ENCODE measurements at regions of chr1 and their contacts with region 1.

Region 1: DNA sequence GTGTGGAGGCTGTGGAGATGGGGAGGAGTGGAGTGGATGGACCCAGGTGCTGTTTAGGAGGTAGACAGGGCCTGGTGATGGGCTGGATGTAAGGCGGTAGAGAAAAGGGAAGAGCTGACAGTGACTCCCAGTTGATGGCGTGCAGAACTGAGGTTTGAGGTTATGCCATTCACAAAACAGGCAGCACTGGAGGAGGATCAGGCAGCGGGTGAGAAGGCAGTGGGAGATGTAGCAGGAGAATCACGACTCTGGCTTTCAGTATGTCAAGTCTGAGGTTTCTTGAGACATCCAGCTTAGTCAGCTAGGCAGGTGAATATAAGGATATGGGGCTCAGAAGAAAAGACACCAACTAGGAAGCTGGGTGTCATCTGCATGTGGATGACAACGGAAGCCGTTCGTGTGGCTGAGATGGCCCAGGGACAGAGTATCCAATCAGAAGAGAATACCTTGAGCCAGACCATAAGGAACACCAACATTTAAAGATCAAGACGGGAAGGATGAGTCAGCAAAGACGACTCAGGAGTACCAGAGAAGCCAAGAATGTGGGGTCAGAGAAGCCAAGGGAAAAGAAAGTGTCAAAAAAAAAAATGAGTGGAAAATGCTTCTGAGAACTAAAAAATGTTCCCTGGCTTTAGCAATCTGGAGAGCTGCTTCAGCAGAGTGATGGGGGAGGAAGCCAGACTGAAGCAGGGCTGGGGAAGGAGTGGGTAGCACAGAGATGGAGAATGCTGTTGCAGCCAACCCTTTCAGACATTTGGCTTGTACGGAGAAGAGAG is 15.2 kb downstream of the LRRN2 start:
- DNase-seq: no peak
- ATAC-seq: no peak
- H3K4me3 Mint-ChIP-seq: no peak overlapping the region
- H3K27ac Mint-ChIP-seq: no peak overlapping the region
- H3K4me1 Mint-ChIP-seq: no peaks in the 10 kb centered on the region
- H3K27me3 Mint-ChIP-seq: no peaks in the 10 kb centered on the region
- CTCF ChIP-seq: no peak

Region 2: GRCh38 chr1:204685236-204686006 is 15.1 kb after region 1 on chr1 and contains the start of gene LRRN2:
- CTCF ChIA-PET with region 1: no interaction called
- POLR2A ChIA-PET with region 1: no interaction called
- intact Hi-C with region 1: loop called (anchors 1 kb)
- DNase-seq: no peak
- ATAC-seq: no peak
- H3K4me3 Mint-ChIP-seq: peak within 1 kb of the TSS; percentile 67
- H3K27ac Mint-ChIP-seq: no peak within 1 kb of the TSS
- H3K4me1 Mint-ChIP-seq: peaks cover 13% of the 10 kb centered on the region
- H3K27me3 Mint-ChIP-seq: peaks cover 51% of the 10 kb centered on the region
- CTCF ChIP-seq: no peak
- total RNA-seq, gene LRRN2: not detected in 2 replicates

Measured in activated B cell treated with CpG ODN at 0.5 μM for 24 hours (primary cell).